ENCODE measurements at regions of chr17 and their contacts with region 1.

Region 1: GRCh38 chr17:64388961-64389565 is 1.6 kb downstream of the PECAM1 start:
- DNase-seq: peak in 3 of 10 donors; percentile 24 to 61 (median 52)
- ATAC-seq: peak; percentile 30 to 32
- H3K4me3 Mint-ChIP-seq: peak overlapping the region; percentile 9 to 84 (median 74)
- H3K27ac Mint-ChIP-seq: peak overlapping the region; percentile 66 to 100 (median 96)
- H3K4me1 Mint-ChIP-seq: peaks cover 53 to 95% (median 93%) of the 10 kb centered on the region in 4 donors
- H3K27me3 Mint-ChIP-seq: no peaks in the 10 kb centered on the region

Region 2: GRCh38 chr17:64343853-64344637 is 45.0 kb before region 1 on chr17:
- POLR2A ChIA-PET with region 1: interaction called, 56 read pairs
- DNase-seq: no peak
- ATAC-seq: no peak
- H3K4me3 Mint-ChIP-seq: no peak overlapping the region
- H3K27ac Mint-ChIP-seq: peak overlapping the region in 9 of 10 donors; percentile 43 to 83 (median 79)
- H3K4me1 Mint-ChIP-seq: peaks cover 5 to 49% (median 33%) of the 10 kb centered on the region in 4 donors
- H3K27me3 Mint-ChIP-seq: no peaks in the 10 kb centered on the region

Region 3: DNA sequence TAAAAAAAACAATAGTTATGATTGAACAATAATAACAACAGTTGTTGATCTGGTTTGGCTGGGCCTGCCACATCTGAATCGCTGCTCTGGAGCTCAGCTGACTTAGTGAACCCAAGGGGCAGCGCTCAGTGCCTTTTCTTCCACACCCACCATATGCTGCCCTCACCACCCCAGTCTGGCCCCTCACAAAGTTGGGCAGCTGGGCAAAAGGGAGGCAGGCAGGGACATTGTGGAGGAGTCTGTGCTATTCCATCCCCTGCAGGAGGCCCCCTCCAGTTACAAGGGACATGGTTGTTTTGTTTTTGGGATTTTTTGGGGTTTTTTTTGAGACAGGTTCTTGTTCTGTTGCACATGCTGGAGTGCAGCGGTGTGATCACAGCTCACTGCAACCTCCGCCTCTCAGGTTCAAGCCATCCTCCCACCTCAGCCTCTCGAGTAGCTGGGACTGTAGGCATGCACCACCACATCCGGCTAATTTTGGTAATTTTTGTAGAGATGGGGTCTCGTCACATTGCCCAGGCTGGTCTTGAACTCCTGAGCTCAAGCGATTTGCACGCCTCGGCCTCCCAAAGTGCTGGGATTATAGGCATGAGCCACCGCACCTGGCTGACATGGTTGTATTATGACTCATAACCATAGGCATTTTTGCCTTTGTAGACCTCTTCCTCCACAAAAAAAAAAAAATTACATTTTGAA is 10.2 kb after region 1 on chr17:
- POLR2A ChIA-PET with region 1: interaction called, 10 read pairs
- DNase-seq: no peak
- ATAC-seq: no peak
- H3K4me3 Mint-ChIP-seq: peak overlapping the region; percentile 32 to 79 (median 48)
- H3K27ac Mint-ChIP-seq: peak overlapping the region; percentile 56 to 99 (median 87)
- H3K4me1 Mint-ChIP-seq: peaks cover 25 to 79% (median 49%) of the 10 kb centered on the region in 4 donors
- H3K27me3 Mint-ChIP-seq: no peaks in the 10 kb centered on the region

Region 4: DNA sequence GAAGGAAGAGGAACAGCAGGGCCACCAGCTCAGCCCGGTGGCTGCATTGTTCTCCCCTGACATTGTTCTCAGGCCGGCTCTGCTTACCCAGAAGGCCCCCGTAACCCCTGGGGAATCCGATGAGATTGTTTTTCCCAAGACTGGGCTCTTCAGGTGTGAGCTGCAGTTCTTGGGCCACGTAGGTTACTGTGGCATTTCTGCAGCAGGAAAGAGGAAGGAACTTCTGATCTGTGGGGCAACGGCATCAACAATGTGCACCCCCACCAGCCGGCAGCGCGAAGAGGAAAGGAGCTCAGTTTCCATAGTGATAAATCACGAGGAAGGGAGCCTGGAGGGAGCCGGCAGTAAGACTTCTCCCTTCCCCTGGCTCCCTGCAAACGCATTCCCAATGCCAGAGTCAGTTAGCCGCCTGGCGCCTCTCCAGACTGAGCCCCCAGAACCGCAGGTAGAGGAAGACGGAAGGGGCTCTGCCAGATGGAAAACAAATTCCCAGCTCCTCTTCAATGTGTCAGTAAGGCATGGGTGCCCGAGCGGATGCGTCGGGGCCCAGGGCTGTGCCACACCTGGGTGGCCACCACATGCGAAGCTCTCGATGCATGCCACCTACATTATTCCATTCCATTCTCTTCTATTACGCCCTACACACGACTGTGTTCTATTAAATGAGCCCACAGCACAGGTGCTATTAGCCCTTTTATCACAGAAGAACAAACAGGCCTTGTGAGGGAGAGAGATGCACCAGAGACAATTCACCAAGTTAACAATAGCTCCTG is 23.1 kb after region 1 on chr17:
- POLR2A ChIA-PET with region 1: interaction called, 39 read pairs
- DNase-seq: peak in 2 of 10 donors; percentile 31 to 68
- ATAC-seq: peak; percentile 54 to 76
- H3K4me3 Mint-ChIP-seq: peak overlapping the region; percentile 63 to 88 (median 80)
- H3K27ac Mint-ChIP-seq: peak overlapping the region; percentile 53 to 91 (median 76)
- H3K4me1 Mint-ChIP-seq: peaks cover 21 to 40% (median 32%) of the 10 kb centered on the region in 4 donors
- H3K27me3 Mint-ChIP-seq: no peaks in the 10 kb centered on the region

Region 5: DNA sequence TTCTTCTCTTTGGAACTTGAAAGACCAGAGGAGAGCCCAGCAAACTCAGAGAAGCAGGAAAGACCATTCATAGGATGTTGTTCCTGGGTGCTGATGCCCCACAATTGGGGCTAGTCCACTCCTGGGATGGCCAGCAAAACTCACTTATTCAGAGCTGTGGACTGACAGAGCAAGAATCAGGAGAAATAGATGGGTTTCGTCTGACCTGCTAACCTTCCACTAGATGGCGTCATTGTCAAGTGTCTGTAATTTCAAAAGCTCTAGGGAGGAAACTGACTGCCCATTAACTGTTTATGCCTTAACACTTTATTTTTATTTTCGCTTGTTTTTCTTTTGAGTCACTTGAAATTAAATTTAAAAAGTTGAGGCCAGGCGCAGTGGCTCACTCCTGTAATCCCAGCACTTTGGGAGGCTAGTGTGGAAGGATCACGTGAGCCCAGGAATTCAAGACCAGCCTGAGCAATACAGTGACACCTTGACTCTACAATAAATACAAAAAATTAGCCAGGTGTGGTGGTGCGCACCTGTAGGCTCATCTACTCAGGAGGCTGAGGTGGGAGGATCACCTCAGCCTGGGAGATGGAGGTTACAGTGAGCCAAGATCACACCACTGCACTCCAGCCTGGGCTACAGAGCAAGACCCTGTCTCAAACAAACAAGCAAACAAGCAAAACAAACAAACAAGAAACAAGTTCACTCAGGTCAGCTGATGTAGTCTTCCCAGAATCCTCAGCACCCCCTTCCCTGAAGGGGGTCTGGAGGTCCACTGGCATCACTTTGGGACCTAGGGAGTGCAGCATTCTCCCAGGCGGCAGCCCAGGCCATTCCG is 31.3 kb after region 1 on chr17:
- POLR2A ChIA-PET with region 1: interaction called, 13 read pairs
- DNase-seq: peak in 6 of 10 donors; percentile 35 to 82 (median 62)
- ATAC-seq: peak; percentile 83 to 89
- H3K4me3 Mint-ChIP-seq: no peak overlapping the region
- H3K27ac Mint-ChIP-seq: no peak overlapping the region
- H3K4me1 Mint-ChIP-seq: peaks cover 0 to 4% (median 2%) of the 10 kb centered on the region in 4 donors
- H3K27me3 Mint-ChIP-seq: no peaks in the 10 kb centered on the region

Region 6: DNA sequence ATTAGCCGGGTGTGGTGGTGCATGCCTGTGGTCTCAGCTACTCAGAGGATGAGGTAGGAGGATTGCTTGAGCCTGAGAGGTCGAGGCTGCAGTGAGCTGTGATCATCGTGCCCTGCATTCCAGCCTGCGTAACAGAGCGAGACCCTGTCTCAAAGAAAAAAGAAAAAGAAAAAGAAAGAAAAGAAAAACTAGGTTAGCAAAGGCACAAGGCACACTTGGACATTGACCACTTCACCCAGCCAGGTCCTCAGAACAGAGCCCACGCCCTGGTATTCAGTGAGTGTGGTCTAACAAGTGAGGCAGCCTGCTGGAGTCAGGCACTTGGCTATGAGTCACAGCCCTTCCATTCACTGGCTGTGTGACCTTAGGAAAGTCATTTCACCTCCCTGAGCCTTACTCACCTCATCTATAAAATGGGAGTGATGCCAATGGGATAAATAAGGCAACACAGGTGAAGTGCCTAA is 70.3 kb after region 1 on chr17:
- POLR2A ChIA-PET with region 1: no interaction called
- DNase-seq: no peak
- ATAC-seq: no peak
- H3K4me3 Mint-ChIP-seq: no peak overlapping the region
- H3K27ac Mint-ChIP-seq: no peak overlapping the region
- H3K4me1 Mint-ChIP-seq: peaks cover 9 to 35% (median 17%) of the 10 kb centered on the region in 4 donors
- H3K27me3 Mint-ChIP-seq: peaks cover 0 to 6% (median 0%) of the 10 kb centered on the region in 5 donors

Measured in naive thymus-derived CD8-positive, alpha-beta T cell (primary cell).